K562 (cell line): ENCODE measurements at regions of chr5 and their contacts with region 1.

Region 1: GRCh38 chr5:27821681-27822080 is 783.3 kb upstream of the CDH9 start:
- DNase-seq: no peak
- ATAC-seq: no peak
- H3K4me3 ChIP-seq: no peak overlapping the region
- H3K27ac ChIP-seq: no peak overlapping the region
- H3K4me1 ChIP-seq: no peaks in the 10 kb centered on the region
- H3K27me3 ChIP-seq: no peaks in the 10 kb centered on the region
- CTCF ChIP-seq: no peak
- EP300 ChIP-seq: no peak
- POLR2A ChIP-seq: no peak
- RAD21 ChIP-seq: no peak

Region 2: DNA sequence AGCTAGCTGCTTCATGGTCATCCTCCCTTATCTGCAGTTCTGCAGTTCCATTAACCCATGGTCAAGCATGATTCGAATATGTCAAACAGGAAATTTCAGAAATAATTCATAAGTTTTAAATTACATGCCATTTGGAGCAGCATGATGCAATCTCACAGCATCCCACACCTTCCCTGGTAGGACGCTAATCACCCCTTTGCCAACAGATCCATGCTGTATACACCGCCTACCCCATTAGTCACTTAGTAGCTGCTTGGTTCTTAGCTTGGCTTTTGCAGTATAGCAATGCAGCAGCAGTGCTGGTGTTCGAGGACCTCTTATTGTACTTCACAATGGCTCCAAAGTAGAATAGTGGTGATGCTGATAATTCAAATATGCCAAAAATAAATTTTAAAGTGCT is 43.6 kb before region 1 on chr5:
- CTCF ChIA-PET with region 1: no interaction called
- POLR2A ChIA-PET with region 1: no interaction called
- in situ Hi-C with region 1: loop called (anchors 10 kb)
- intact Hi-C with region 1: no loop called
- DNase-seq: no peak
- ATAC-seq: no peak
- H3K4me3 ChIP-seq: no peak overlapping the region
- H3K27ac ChIP-seq: no peak overlapping the region
- H3K4me1 ChIP-seq: no peaks in the 10 kb centered on the region
- H3K27me3 ChIP-seq: no peaks in the 10 kb centered on the region
- CTCF ChIP-seq: no peak
- EP300 ChIP-seq: no peak
- POLR2A ChIP-seq: no peak
- RAD21 ChIP-seq: no peak

Region 3: DNA sequence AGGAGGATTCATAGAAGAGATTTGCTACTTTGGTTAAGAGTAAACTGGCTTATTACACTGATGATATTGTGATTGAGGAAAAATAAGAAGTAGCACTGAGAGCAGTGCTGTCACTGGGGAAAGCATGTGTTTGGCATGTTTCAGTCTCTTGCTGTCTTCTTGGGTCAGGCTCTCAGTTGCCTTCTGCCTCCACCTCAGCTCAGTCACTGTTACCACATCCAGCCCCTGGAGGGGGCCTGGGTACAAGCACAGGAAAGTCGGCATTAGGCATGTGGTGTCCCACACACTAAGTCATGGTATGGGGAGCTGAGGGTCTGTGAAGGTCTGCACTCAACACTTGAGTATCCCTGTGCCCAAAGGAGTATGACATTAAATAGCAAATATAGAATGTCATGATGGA is 175.0 kb after region 1 on chr5:
- CTCF ChIA-PET with region 1: no interaction called
- POLR2A ChIA-PET with region 1: no interaction called
- in situ Hi-C with region 1: no loop called
- intact Hi-C with region 1: no loop called
- DNase-seq: no peak
- ATAC-seq: no peak
- H3K4me3 ChIP-seq: no peak overlapping the region
- H3K27ac ChIP-seq: no peak overlapping the region
- H3K4me1 ChIP-seq: no peaks in the 10 kb centered on the region
- H3K27me3 ChIP-seq: no peaks in the 10 kb centered on the region
- CTCF ChIP-seq: no peak
- EP300 ChIP-seq: no peak
- POLR2A ChIP-seq: no peak
- RAD21 ChIP-seq: no peak